ENCODE measurements at regions of chr1 and their contacts with region 1.

Region 1: GRCh38 chr1:164772635-164773034 is 213.7 kb downstream of the PBX1 start:
- DNase-seq: peak; percentile 95
- H3K4me3 ChIP-seq: no peak overlapping the region
- H3K27ac ChIP-seq: peak overlapping the region; percentile 62
- H3K4me1 ChIP-seq: peaks cover 25% of the 10 kb centered on the region
- H3K27me3 ChIP-seq: no peaks in the 10 kb centered on the region
- CTCF ChIP-seq: no peak

Region 2: DNA sequence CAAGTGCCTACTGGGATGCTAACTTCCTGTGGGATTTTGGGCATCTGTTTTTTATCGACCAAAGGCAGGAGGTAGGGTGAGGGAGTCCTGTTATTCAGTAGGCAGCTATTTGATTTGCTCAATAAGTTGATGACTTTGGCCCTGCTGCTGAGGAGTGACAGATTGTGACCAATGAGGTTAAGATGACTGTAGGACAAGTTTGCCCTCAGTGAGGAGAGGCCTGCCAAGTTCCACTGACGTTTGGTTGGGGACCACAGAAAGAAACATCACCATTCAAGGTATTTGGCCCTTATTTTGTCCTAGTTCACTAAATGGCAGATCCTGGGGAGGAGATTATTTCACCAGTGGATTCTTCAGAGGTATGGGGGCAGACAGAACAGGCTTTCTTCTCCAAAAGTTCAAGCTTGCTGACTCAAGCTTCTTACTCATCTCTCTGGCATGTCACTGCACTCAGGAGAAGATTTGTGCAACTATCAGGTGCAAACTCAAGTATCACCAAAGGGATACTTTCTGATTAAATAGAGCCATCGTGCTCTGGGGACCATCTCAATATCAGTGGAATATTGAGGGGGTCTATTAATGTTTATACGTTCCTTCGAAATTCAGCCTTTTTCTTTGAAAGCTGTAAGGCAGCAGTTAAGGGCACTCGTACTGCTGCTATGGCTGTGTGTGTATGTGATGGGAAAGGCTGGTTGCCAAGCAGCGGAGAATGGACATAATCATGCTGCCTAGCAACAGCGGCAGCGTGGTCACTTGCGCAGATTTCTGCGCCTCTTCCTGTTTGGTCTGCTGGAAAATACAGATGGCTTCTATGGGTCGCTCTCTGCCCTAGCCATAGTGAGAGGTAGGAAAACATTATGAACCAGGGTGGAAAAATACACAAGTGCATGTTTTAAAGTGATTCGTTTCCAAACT is 134.9 kb before region 1 on chr1:
- CTCF ChIA-PET with region 1: no interaction called
- dilution Hi-C with region 1: no loop called
- in situ Hi-C with region 1: loop called in 1 of 2 experiments (anchors 10 kb)
- intact Hi-C with region 1: no loop called
- DNase-seq: peak; percentile 87
- H3K4me3 ChIP-seq: no peak overlapping the region
- H3K27ac ChIP-seq: peak overlapping the region; percentile 84
- H3K4me1 ChIP-seq: peaks cover 27% of the 10 kb centered on the region
- H3K27me3 ChIP-seq: no peaks in the 10 kb centered on the region
- CTCF ChIP-seq: no peak

Region 3: GRCh38 chr1:164699815-164700491 is 72.7 kb before region 1 on chr1:
- CTCF ChIA-PET with region 1: interaction called, 5 read pairs
- dilution Hi-C with region 1: loop called (anchors 5 kb)
- in situ Hi-C with region 1: no loop called
- intact Hi-C with region 1: loop called (anchors 5 kb)
- DNase-seq: no peak
- H3K4me3 ChIP-seq: no peak overlapping the region
- H3K27ac ChIP-seq: no peak overlapping the region
- H3K4me1 ChIP-seq: peaks cover 28% of the 10 kb centered on the region
- H3K27me3 ChIP-seq: no peaks in the 10 kb centered on the region
- CTCF ChIP-seq: no peak

Region 4: GRCh38 chr1:164707868-164708331 is 64.7 kb before region 1 on chr1:
- CTCF ChIA-PET with region 1: interaction called, 5 read pairs
- dilution Hi-C with region 1: no loop called
- in situ Hi-C with region 1: no loop called
- intact Hi-C with region 1: loop called (anchors 5 kb)
- DNase-seq: peak; percentile 83
- H3K4me3 ChIP-seq: no peak overlapping the region
- H3K27ac ChIP-seq: no peak overlapping the region
- H3K4me1 ChIP-seq: peaks cover 22% of the 10 kb centered on the region
- H3K27me3 ChIP-seq: no peaks in the 10 kb centered on the region
- CTCF ChIP-seq: no peak

Measured in mammary epithelial cell (primary cell).